ENCODE measurements at regions of chr1 and their contacts with region 1.

Region 1: GRCh38 chr1:224458996-224459395 is 24.4 kb upstream of the WDR26 start:
- DNase-seq: no peak
- CTCF ChIP-seq: no peak

Region 2: GRCh38 chr1:224113918-224114786 is 344.8 kb before region 1 on chr1 and contains the start of gene FBXO28:
- CTCF ChIA-PET with region 1: interaction called, 63 read pairs
- POLR2A ChIA-PET with region 1: interaction called, 3 read pairs
- DNase-seq: peak; percentile 95
- CTCF ChIP-seq: no peak

Region 3: GRCh38 chr1:224438989-224439388 is 20.0 kb before region 1 on chr1:
- CTCF ChIA-PET with region 1: interaction called, 34 read pairs
- POLR2A ChIA-PET with region 1: no interaction called
- DNase-seq: no peak
- CTCF ChIP-seq: no peak

Region 4: DNA sequence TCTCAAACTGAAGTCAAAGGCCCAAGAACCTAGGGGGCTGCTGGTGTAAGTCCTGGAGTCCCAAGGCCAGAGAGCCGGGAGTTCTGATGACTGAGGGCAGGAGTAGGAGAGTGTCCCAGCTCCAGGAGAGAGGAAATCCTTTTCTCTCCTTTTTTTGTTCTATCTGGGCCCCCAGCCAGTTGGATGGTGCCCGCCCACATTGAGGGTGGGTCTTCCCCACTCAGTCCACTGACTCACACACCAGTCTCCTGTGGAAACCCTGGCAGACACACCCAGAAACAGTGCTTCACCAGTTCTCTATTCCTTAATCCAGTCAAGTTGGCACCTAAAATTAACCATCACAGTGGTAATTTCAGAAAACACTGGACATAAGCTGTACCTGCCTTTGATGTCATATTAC is 11.7 kb before region 1 on chr1:
- CTCF ChIA-PET with region 1: interaction called, 37 read pairs
- POLR2A ChIA-PET with region 1: no interaction called
- DNase-seq: no peak
- CTCF ChIP-seq: no peak

Region 5: DNA sequence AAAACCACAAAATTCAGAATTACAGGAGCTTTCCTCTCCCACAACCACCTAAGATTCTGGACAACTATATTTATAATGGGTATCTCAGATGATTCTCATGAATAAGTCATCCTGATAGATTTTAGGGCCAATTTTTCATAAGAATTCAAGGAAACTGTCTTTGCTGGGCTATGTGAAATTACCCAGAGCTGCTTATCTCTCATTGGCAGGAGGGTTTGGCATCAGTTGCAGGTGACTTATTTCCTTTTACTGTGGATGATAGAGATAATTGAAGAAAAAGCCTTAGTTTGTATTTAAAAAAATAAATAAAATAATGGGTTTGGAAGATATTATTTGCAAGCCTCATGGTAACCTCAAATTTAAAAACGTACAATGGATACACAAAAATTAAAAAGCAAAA is 13.8 kb after region 1 on chr1:
- CTCF ChIA-PET with region 1: interaction called, 28 read pairs
- POLR2A ChIA-PET with region 1: no interaction called
- DNase-seq: no peak
- CTCF ChIP-seq: no peak

Region 6: GRCh38 chr1:224488806-224489499 is 30.0 kb after region 1 on chr1:
- CTCF ChIA-PET with region 1: interaction called, 27 read pairs
- POLR2A ChIA-PET with region 1: no interaction called
- DNase-seq: no peak
- CTCF ChIP-seq: no peak

Region 7: GRCh38 chr1:224497714-224498573 is 38.9 kb after region 1 on chr1:
- CTCF ChIA-PET with region 1: interaction called, 24 read pairs
- POLR2A ChIA-PET with region 1: no interaction called
- DNase-seq: peak; percentile 84
- CTCF ChIP-seq: no peak